Transverse colon (tissue), 4 donors: ENCODE measurements at regions of chr19 and their contacts with region 1.

Region 1: DNA sequence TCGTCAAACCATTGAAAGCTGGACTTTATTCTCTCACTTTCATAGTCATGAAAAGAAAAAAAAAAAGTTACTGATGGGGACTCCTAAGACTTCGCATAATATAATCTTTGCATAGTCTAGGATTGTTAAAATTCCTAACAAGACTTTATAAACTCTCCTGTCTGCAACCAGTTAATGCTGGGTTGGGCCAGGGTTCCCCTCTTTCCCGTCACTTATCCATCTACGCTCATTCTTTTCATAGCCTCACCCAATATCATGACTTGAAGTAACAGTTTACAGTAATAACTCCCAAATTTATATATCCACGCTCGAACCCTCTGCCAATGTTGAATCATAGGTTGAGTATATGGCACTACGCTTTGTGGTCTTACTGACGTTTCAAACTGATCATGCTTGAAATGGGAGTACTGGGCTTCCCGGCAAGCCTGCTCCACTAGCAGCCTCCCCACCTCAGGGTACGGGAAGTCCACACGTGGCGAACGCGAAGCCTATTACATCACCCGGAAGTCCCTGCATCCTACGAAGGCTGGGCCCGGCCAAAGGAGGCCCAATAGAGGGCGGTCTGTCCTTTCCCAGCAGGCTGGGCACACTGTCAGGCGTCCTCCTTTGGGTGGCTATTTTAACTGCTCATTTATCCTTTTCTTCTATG is 743 bp upstream of the ZNF460 start:
- DNase-seq: peak; percentile 91
- H3K4me3 ChIP-seq: peak overlapping the region; percentile 86 to 98 (median 92)
- H3K27ac ChIP-seq: peak overlapping the region; percentile 94 to 99 (median 97)
- H3K4me1 ChIP-seq: peaks cover 9 to 34% (median 15%) of the 10 kb centered on the region in 4 donors
- H3K27me3 ChIP-seq: no peaks in the 10 kb centered on the region
- CTCF ChIP-seq: peak in 1 of 5 experiments; percentile 7
- EP300 ChIP-seq: peak; percentile 92
- POLR2A ChIP-seq: no peak

Region 2: GRCh38 chr19:57088133-57088532 is 191.4 kb before region 1 on chr19:
- in situ Hi-C with region 1: no loop called
- intact Hi-C with region 1: no loop called
- DNase-seq: no peak
- H3K4me3 ChIP-seq: no peak overlapping the region
- H3K27ac ChIP-seq: no peak overlapping the region
- H3K4me1 ChIP-seq: no peaks in the 10 kb centered on the region
- H3K27me3 ChIP-seq: no peaks in the 10 kb centered on the region
- CTCF ChIP-seq: no peak
- EP300 ChIP-seq: no peak
- POLR2A ChIP-seq: no peak

Region 3: DNA sequence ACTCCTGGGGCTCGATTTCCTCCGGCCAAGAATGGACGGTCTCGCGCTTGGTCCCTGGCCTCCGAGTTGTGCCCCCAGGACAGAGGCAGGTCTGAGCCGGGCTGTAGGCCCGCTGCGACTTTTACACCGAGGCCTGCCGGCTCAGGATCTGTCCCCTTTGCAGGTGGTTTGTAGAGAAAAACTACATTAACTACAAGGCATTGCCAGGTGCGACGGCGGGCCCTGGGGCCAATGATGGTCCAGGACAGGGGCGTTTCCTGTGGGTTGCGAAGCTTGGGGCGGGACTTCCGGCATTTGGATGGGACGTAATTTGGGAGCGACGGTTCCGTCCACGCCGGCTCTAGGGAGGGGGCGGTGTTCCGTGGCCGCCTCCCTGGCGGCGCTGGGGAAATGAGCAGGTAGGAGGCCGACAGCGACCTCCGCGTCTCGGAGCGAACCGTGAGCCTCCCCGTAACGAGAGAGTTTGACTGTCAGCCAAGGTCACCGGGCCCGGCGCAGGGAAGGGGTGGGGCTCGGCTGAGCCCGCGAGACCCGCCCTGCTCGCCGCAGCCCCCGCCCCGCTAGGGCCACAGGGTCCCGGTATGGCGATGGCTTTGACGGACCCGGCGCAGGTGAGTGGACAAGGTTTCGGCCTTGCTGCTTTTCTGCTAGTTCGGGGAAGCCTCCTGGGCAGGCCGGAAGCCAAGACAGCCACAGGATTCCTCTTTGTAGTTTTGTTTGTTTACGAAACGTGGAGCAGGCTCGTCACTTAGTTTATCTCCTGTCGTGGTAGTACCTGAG is 39.0 kb before region 1 on chr19 and contains the start of gene ZNF805:
- in situ Hi-C with region 1: no loop called
- intact Hi-C with region 1: loop called (anchors 2 kb)
- DNase-seq: peak; percentile 97
- H3K4me3 ChIP-seq: peak within 1 kb of the TSS; percentile 85 to 96 (median 86)
- H3K27ac ChIP-seq: peak within 1 kb of the TSS; percentile 90 to 95 (median 92)
- H3K4me1 ChIP-seq: peaks cover 7 to 24% (median 18%) of the 10 kb centered on the region in 4 donors
- H3K27me3 ChIP-seq: no peaks in the 10 kb centered on the region
- CTCF ChIP-seq: peak in 2 of 5 experiments; percentile 18 to 24
- EP300 ChIP-seq: peak; percentile 10
- POLR2A ChIP-seq: peak; percentile 74
- total RNA-seq, gene ZNF805: 11.1 to 21.3 (median 14.5) TPM

Region 4: GRCh38 chr19:57248646-57249045 is 30.9 kb before region 1 on chr19:
- in situ Hi-C with region 1: no loop called
- intact Hi-C with region 1: loop called (anchors 1 kb)
- DNase-seq: no peak
- H3K4me3 ChIP-seq: no peak overlapping the region
- H3K27ac ChIP-seq: no peak overlapping the region
- H3K4me1 ChIP-seq: no peaks in the 10 kb centered on the region
- H3K27me3 ChIP-seq: no peaks in the 10 kb centered on the region
- CTCF ChIP-seq: no peak
- EP300 ChIP-seq: no peak
- POLR2A ChIP-seq: no peak